Dendritic cell treated with granulocyte-macrophage colony-stimulating factor and Interleukin-4, amounts not matched to agents 40 ng/mL and 50 ng/mL, for 4 days (primary cell): ENCODE measurements at regions of chr4 and their contacts with region 1.

Region 1: GRCh38 chr4:105471566-105472176 is 2.2 kb downstream of the PPA2 start:
- H3K4me3 Mint-ChIP-seq: peak overlapping the region; percentile 59
- H3K27ac Mint-ChIP-seq: peak overlapping the region; percentile 99
- H3K4me1 Mint-ChIP-seq: peaks cover 42% of the 10 kb centered on the region
- H3K27me3 Mint-ChIP-seq: no peaks in the 10 kb centered on the region

Region 2: DNA sequence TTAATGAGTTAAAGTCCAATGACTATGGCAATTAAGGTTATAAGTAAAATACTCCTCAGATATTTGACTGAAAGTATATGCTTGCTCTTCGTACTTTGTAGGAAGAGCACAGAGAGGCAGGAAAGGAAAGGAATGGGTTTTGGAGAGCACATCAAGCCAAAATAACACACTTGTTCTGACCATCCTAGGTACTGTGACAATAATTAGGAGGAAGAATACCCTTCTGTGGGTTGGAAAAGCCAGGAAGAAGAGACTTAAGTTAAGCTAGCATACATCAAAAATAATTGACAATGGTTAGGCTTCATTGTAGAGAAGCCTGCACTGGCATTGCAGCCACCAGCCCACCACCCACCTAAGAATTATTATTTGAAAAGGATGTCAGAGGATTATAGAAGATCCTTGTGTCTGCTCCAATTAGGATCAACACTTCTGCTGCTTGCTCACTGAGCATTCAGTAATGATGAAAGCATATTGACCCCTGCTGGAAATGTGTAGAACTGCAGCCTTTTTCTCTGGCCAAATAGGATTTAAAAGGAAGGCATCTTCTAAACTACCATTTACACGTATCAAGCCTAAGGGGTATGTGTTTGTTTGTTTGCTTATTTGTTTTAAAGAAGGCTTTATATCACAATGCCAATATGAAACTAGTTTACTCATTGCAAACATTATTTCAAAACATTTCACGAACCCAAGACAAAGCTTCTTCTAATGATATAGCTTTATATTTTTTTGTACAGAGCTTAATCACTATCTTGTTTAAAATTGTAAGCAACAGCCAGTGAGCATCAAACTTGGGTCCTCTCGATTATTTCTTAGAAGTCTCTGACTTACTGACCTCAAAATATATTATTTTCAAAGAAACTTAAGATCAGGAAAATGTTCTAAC is 611.2 kb before region 1 on chr4:
- intact Hi-C with region 1: loop called (anchors 10 kb)
- H3K4me3 Mint-ChIP-seq: no peak overlapping the region
- H3K27ac Mint-ChIP-seq: no peak overlapping the region
- H3K4me1 Mint-ChIP-seq: peaks cover 5% of the 10 kb centered on the region
- H3K27me3 Mint-ChIP-seq: no peaks in the 10 kb centered on the region

Region 3: GRCh38 chr4:105061136-105061696 is 410.5 kb before region 1 on chr4:
- intact Hi-C with region 1: loop called (anchors 5 kb)
- H3K4me3 Mint-ChIP-seq: peak overlapping the region; percentile 55
- H3K27ac Mint-ChIP-seq: peak overlapping the region; percentile 96
- H3K4me1 Mint-ChIP-seq: peaks cover 48% of the 10 kb centered on the region
- H3K27me3 Mint-ChIP-seq: no peaks in the 10 kb centered on the region

Region 4: GRCh38 chr4:105191621-105192210 is 280.0 kb before region 1 on chr4:
- intact Hi-C with region 1: loop called (anchors 5 kb)
- H3K4me3 Mint-ChIP-seq: no peak overlapping the region
- H3K27ac Mint-ChIP-seq: peak overlapping the region; percentile 63
- H3K4me1 Mint-ChIP-seq: peaks cover 70% of the 10 kb centered on the region
- H3K27me3 Mint-ChIP-seq: no peaks in the 10 kb centered on the region

Region 5: GRCh38 chr4:105399532-105400161 is 72.0 kb before region 1 on chr4:
- intact Hi-C with region 1: loop called (anchors 5 kb)
- H3K4me3 Mint-ChIP-seq: no peak overlapping the region
- H3K27ac Mint-ChIP-seq: no peak overlapping the region
- H3K4me1 Mint-ChIP-seq: no peaks in the 10 kb centered on the region
- H3K27me3 Mint-ChIP-seq: no peaks in the 10 kb centered on the region

Region 6: DNA sequence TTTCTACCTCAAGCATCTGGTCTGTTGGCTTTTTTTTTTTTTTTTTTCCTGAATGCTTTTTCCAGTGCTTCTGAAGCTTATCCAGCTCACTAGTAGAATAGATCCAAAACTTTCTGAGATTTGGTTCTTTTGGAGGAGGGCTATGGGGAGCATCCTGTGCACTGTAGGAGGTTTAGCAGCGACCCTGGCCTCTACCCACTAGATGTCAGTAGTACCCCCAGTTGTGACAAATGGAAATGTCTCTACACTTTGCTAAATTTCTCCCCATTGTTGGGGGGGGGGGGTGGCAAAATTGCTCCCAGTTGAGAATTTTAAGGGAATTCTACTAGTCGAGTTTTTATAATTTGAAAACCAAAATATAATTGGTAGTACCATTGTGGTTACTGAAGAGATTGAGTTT is 25.2 kb after region 1 on chr4:
- intact Hi-C with region 1: no loop called
- H3K4me3 Mint-ChIP-seq: no peak overlapping the region
- H3K27ac Mint-ChIP-seq: no peak overlapping the region
- H3K4me1 Mint-ChIP-seq: no peaks in the 10 kb centered on the region
- H3K27me3 Mint-ChIP-seq: no peaks in the 10 kb centered on the region

Region 7: GRCh38 chr4:105679186-105679585 is 207.5 kb after region 1 on chr4:
- intact Hi-C with region 1: no loop called
- H3K4me3 Mint-ChIP-seq: no peak overlapping the region
- H3K27ac Mint-ChIP-seq: no peak overlapping the region
- H3K4me1 Mint-ChIP-seq: no peaks in the 10 kb centered on the region
- H3K27me3 Mint-ChIP-seq: no peaks in the 10 kb centered on the region

Region 8: DNA sequence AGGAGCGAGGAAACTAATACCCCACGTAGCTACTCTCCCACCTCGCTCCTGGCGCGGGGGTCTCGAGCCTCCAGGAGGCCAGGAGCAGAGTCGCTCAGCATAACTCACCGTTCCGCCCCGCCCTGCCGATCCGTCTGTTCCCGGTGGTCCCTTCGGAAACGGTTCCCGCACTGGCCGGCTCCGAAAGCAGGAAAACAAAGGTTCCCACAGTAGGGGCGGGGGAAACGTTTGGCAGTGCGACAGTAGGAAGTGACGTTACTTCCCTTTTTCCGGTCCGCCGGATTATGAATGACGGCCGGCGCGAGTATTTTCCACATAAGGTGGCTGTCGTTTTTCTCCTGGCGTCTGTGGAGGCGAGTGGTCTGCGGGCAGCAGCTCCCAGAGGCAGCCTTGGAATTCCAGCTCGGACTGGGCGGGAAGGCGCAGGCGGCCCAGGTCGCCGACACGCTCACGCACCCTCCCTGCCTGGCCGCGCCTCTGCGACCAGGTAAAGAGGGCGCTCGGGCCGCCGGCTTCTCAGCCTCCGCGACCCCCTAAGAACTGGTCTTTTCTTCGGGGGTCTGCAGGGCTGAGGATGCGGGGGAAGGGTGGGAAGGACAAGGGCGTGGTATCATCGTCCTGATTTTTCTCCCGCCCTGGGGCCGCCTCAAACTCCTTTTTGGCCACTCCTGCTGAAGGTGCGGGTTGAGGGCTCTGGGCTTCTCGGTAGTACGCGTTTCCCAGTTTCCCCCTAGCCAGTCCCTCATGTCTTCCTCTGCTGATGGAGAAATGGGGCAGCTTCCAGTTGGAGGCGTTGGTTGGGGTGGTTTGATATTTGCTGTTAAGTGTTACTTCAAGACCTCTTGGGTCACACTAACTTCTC is 237.1 kb after region 1 on chr4 and contains the starts of genes GSTCD and INTS12:
- intact Hi-C with region 1: loop called (anchors 2 kb)
- H3K4me3 Mint-ChIP-seq: peak within 1 kb of the TSS; percentile 94
- H3K27ac Mint-ChIP-seq: peak within 1 kb of the TSS; percentile 93
- H3K4me1 Mint-ChIP-seq: peaks cover 27% of the 10 kb centered on the region
- H3K27me3 Mint-ChIP-seq: no peaks in the 10 kb centered on the region